SK-N-SH (cell line): ENCODE measurements at regions of chr20 and their contacts with region 1.

Region 1: GRCh38 chr20:36439040-36439730 is 102.1 kb upstream of the MYL9 start:
- DNase-seq: peak; percentile 86
- H3K4me3 ChIP-seq: no peak overlapping the region; a peak in 1 of 4 replicates
- H3K27ac ChIP-seq: no peak overlapping the region
- H3K4me1 ChIP-seq: peaks cover 0 to 4% of the 10 kb centered on the region in 2 experiments; a peak in 1 of 4 replicates
- H3K27me3 ChIP-seq: no peaks in the 10 kb centered on the region
- CTCF ChIP-seq: peak; percentile 92
- EP300 ChIP-seq: no peak
- RAD21 ChIP-seq: peak; percentile 94

Region 2: DNA sequence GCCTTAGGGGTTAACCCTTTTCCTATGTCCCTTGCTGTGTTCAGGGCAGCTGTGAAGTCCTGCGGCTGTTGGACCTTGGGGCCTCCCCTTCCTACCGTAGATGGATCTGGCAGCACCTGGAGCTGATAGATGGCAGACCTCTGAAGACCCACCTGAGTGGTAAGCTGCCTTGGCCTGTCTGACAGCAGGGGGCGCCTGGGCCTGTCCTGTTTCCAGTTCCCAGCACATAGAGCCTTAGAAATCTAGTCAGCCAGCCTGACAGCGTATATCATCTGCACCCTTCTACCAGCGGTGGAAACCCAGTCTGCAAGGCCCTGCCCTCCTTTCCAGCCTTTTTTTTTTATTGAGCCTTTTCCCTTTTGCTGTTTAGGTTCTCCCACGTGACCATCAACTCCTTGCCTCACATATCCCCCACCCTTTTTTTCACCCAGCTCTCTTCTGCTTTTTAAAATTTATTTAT is 444.2 kb before region 1 on chr20:
- CTCF ChIA-PET with region 1: interaction called, 14 read pairs
- POLR2A ChIA-PET with region 1: no interaction called
- DNase-seq: peak; percentile 79
- H3K4me3 ChIP-seq: peak overlapping the region in 1 of 2 experiments; percentile 34; a peak in 1 of 4 replicates
- H3K27ac ChIP-seq: no peak overlapping the region
- H3K4me1 ChIP-seq: no peaks in the 10 kb centered on the region
- H3K27me3 ChIP-seq: no peaks in the 10 kb centered on the region
- CTCF ChIP-seq: peak; percentile 98
- EP300 ChIP-seq: no peak
- RAD21 ChIP-seq: peak; percentile 91

Region 3: DNA sequence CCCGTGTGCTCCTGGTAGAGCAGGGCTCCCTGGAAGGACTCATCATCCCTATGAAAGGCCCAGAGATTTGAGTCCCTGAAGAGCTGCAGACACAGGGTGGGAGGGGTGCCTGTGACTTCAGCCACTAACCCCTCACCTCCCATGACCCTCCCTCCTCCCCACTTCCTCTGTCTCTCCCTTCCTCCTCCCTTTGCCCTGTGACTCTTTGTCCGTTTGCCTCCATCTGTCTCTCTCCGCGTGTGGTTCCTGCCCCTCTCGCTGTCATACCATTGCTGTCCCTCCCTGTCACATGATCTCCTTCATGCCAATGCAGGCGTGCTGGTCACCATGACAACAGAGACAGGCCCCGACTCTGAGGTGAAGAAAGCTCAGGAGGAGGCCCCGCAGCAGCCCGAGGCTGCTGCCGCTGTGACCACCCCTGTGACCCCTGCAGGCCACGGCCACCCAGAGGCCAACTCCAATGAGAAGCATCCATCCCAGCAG is 265.7 kb before region 1 on chr20:
- CTCF ChIA-PET with region 1: interaction called, 10 read pairs
- POLR2A ChIA-PET with region 1: no interaction called
- DNase-seq: peak; percentile 60
- H3K4me3 ChIP-seq: no peak overlapping the region
- H3K27ac ChIP-seq: no peak overlapping the region
- H3K4me1 ChIP-seq: peaks cover 8 to 21% of the 10 kb centered on the region in 2 experiments; a peak in 3 of 4 replicates
- H3K27me3 ChIP-seq: no peaks in the 10 kb centered on the region
- CTCF ChIP-seq: no peak
- EP300 ChIP-seq: no peak
- RAD21 ChIP-seq: no peak

Region 4: GRCh38 chr20:36214684-36215256 is 224.4 kb before region 1 on chr20:
- CTCF ChIA-PET with region 1: interaction called, 219 read pairs
- POLR2A ChIA-PET with region 1: no interaction called
- DNase-seq: peak; percentile 71
- H3K4me3 ChIP-seq: no peak overlapping the region; a peak in 1 of 4 replicates
- H3K27ac ChIP-seq: no peak overlapping the region
- H3K4me1 ChIP-seq: no peaks in the 10 kb centered on the region
- H3K27me3 ChIP-seq: no peaks in the 10 kb centered on the region
- CTCF ChIP-seq: peak; percentile 62
- EP300 ChIP-seq: no peak
- RAD21 ChIP-seq: peak; percentile 76

Region 5: DNA sequence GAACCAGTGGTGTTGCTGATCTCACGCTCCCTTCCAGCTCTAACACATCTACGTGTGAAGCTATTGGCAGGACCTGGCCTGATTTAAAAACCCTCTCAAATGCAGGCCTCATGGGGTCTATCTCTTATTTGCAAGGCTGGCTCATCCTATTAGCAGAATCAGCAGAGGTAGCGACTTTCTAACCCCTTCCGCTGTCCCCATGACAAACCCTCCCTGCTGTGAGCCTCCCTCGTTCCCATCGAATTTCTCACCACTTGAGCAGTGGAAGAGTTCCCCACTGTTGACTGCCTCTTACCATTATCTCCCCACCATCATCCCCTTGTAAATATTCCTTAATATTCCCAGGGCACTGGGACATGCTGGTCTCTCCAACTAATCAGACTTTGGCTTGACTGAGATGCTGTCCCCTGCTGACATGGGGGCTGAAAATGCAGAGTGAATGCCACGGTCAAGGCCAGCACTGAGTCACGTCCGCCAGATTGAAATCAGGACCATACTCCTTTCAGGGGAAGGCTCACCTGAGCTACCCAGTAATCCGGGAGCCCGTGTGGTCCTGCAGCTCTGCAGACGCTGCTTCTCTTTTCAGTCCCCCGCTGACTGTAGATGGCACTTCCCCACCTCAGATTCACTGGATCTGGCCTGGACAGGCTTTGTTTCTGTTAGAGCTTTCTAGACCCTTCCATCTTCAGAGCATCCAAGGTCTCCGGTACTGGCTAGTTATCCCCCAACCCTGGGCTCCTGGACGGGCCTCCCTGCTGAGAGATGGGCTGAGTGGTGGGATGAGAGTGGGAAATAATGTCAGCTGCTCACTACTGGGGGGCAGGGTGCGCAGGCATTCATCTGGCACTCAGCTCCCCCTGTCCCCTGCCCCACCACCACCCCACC is 179.8 kb before region 1 on chr20:
- CTCF ChIA-PET with region 1: interaction called, 10 read pairs
- POLR2A ChIA-PET with region 1: no interaction called
- DNase-seq: no peak
- H3K4me3 ChIP-seq: no peak overlapping the region
- H3K27ac ChIP-seq: no peak overlapping the region
- H3K4me1 ChIP-seq: no peaks in the 10 kb centered on the region
- H3K27me3 ChIP-seq: no peaks in the 10 kb centered on the region
- CTCF ChIP-seq: no peak
- EP300 ChIP-seq: no peak
- RAD21 ChIP-seq: no peak

Region 6: DNA sequence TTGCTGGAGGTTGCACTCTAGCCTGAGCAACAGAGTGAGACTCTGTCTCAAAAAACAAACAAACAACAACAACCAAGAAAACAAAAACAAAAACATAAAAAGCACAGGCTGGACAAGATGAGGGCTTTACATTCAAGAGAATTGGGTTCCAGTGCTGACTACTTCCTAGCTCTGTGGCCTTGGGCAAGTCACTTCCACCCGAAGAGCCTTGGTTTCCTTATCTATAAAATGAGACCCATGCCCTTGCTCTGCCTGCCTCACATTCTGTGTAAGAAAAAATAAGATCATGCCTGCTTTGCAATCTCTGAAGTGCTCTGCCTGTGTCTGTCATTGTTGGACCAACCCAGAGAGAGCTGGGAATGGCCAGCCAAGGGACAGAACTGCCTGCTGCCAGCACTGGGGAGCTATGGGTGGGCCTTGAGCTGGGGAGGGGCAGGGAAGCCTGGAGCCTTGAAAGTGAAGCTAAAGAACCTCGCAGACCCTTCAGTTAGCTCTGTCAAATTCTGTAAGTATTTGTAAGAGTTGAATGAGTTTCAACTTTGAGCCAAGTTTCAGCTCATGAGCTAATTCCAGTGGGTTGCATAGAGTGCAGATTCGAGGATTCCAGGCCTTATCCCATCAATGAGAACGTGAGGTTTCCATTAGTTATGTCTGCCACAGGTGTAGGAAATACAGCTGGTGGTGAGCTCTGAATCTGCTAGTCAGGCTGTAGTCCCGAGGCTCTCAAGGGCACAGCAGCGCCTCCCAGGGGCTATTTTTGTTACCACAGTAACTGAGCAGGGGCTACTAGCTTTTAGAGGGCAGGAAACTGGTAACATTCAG is 39.8 kb before region 1 on chr20:
- CTCF ChIA-PET with region 1: interaction called, 22 read pairs
- POLR2A ChIA-PET with region 1: no interaction called
- DNase-seq: peak; percentile 81
- H3K4me3 ChIP-seq: no peak overlapping the region; a peak in 1 of 4 replicates
- H3K27ac ChIP-seq: no peak overlapping the region
- H3K4me1 ChIP-seq: peaks cover 0 to 12% of the 10 kb centered on the region in 2 experiments; a peak in 1 of 4 replicates
- H3K27me3 ChIP-seq: peaks cover 20% of the 10 kb centered on the region; the same call in 1 of the 2 replicates
- CTCF ChIP-seq: peak; percentile 51
- EP300 ChIP-seq: no peak
- RAD21 ChIP-seq: peak; percentile 72

Region 7: DNA sequence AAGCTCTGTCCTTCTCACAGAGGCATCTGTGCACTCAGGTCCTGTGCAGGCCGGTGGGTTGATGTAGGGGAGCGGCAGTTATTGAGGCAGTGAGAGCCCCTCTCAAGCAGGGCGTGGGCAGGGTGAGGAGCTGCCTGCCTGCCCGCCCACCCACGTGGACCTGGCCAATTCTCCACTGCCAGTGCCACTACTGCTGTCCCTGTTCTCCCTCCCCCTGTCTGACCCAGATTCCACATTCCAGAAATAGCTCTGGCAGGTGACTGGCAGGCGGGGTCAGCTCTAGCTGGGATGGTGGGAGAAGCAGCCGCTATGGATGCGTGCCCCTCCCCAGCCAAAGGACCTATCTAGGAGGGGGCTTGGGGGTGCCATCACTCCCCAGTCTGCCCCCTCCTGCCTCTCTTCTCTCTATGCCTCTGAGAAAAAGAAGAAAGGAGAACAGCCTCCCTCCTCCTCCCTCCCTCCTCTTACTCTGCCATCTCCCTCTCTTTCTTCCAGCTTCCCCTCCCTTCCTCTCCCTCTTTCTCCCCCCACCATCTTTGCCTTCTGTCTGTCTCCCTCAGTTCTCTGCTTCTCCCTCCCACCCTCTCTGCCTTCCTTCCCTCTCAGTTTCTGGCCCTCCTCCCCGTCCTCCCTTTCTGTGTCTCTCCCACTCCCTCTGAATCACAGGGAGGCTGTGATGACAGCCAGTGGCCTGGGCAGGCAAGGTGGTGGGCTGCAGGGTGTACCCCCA is 15.7 kb after region 1 on chr20:
- CTCF ChIA-PET with region 1: interaction called, 19 read pairs
- POLR2A ChIA-PET with region 1: no interaction called
- DNase-seq: no peak
- H3K4me3 ChIP-seq: no peak overlapping the region
- H3K27ac ChIP-seq: no peak overlapping the region
- H3K4me1 ChIP-seq: peaks cover 0 to 6% of the 10 kb centered on the region in 2 experiments; a peak in 1 of 4 replicates
- H3K27me3 ChIP-seq: no peaks in the 10 kb centered on the region
- CTCF ChIP-seq: no peak
- EP300 ChIP-seq: no peak
- RAD21 ChIP-seq: no peak